H1 (cell line): ENCODE measurements at regions of chr17 and their contacts with region 1.

Region 1: DNA sequence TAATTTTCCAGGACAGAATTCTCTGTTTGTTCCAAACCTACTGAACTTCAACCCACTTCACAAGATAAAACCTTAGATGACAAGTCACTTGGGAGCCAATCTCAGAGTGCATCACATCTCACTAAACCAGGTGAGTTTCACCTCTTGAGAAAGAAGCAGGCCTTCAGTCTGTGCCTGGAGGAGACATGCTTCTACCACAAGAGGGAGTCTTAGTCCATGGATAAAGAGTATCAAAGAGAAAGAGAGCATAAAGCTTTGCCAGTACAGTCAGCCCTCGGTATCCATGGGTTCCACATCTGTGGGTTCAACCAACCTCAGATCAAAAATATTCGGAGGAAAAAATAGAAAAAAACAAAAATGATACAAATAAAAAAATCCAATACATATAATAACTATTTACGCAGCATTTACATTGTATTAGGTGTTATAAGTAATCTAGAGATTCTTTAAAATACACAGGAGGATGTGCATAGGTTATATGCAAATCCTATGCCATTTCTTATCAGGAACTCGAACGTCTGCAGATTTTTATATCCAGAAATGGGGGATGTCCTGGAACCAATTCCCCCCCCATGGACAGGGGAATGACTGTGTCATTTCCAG is 37.7 kb downstream of the DUSP14 start:
- DNase-seq: peak in 1 of 2 experiments; percentile 40
- H3K4me3 ChIP-seq: no peak overlapping the region
- H3K27ac ChIP-seq: no peak overlapping the region
- H3K4me1 ChIP-seq: no peaks in the 10 kb centered on the region
- H3K27me3 ChIP-seq: no peaks in the 10 kb centered on the region
- CTCF ChIP-seq: peak in 2 of 3 experiments; percentile 79 to 83; a peak in 3 of 4 replicates
- EP300 ChIP-seq: no peak
- POLR2A ChIP-seq: no peak
- RAD21 ChIP-seq: peak; percentile 86 to 88

Region 2: DNA sequence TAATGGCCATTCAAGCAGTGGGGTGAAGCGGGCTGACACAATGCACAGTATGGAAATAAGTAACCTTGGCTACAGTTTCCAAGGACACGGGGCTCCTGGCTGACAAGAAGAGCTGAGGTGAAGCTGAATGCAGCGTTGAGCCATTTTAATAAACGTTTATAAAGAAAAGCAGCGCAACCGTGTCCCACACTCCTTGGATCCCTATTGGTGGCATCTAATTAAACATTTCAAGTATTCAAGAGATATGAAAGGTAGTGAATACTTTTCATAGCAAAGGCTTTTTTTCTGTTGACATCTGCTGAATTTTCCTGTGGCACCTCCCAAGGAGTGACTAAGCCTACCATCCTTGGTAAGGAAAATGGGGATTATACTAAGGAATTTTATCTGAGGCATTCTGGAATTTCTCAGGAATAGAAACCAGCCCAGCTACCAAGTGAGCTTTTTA is 11.2 kb before region 1 on chr17:
- CTCF ChIA-PET with region 1: interaction called, 29 read pairs
- POLR2A ChIA-PET with region 1: no interaction called
- DNase-seq: no peak
- H3K4me3 ChIP-seq: no peak overlapping the region
- H3K27ac ChIP-seq: no peak overlapping the region
- H3K4me1 ChIP-seq: peaks cover 0 to 2% (median 0%) of the 10 kb centered on the region in 4 experiments; a peak in 1 of 7 replicates
- H3K27me3 ChIP-seq: no peaks in the 10 kb centered on the region
- CTCF ChIP-seq: no peak
- EP300 ChIP-seq: no peak
- POLR2A ChIP-seq: no peak
- RAD21 ChIP-seq: no peak

Region 3: DNA sequence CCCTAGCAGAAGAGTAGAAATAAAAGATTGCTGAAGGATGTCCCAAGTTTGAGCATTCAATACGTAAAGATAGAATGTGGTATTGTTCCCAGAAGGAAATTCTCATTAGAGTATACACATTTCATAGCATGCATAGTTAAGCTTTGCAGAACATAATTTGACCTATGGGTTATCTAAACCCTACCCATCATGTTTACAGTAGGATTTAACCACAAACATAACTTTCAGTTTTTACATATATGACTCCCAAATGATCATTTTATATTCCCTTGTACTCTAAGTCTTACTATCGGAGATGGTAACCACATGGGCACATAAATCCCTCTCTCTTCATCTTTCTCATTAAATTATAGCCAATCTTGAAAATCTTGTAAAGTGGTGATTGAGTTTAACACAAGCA is 30.9 kb after region 1 on chr17:
- CTCF ChIA-PET with region 1: interaction called, 19 read pairs
- POLR2A ChIA-PET with region 1: no interaction called
- DNase-seq: no peak
- H3K4me3 ChIP-seq: no peak overlapping the region
- H3K27ac ChIP-seq: no peak overlapping the region
- H3K4me1 ChIP-seq: peaks cover 0 to 8% (median 4%) of the 10 kb centered on the region in 4 experiments; a peak in 3 of 7 replicates
- H3K27me3 ChIP-seq: no peaks in the 10 kb centered on the region
- CTCF ChIP-seq: no peak
- EP300 ChIP-seq: no peak
- POLR2A ChIP-seq: no peak
- RAD21 ChIP-seq: no peak